A673 (cell line): ENCODE measurements at regions of chr14 and their contacts with region 1.

Region 1: DNA sequence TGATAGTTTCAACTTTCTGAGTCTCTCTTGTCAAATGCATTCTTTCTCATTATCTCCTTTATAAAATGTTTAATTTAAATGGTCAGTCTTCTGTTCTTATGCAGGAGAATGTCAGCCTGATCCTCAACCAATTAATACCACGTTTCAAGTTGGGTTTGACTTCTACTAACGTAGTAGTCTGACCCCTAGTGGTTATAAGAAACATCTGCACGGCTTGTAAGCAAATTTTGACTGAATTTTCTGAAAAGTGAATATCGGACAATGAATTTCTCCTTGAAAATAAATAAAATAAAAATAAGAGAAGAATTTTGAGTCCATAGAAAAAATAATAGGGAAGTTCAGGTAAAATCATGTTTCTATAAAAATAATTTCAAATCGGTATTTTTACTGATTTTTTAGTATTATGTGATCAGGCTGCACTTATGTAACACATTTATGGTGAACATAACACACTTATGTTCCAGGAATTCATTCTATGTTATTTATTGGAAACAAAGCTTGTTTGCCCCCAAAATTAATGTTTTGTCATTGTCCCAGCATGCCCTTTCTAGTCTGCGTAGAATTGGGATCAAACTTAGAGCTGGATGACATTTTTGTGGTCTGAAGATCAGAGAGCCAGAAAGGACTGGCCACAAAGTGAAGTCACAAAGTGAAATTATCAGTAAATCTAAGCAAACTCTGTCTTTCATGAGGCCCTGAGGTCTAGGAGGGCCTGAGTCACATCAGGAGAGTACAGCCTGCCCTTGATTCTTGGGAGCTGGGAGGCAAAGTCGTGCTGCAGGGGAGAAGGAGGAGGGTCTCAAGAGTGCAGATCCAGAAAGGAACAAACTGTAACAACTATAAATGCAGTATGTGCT is 101.2 kb upstream of the STXBP6 start:
- DNase-seq: peak; percentile 68
- H3K4me3 ChIP-seq: no peak overlapping the region
- H3K27ac ChIP-seq: no peak overlapping the region
- H3K4me1 ChIP-seq: no peaks in the 10 kb centered on the region
- H3K27me3 ChIP-seq: no peaks in the 10 kb centered on the region
- CTCF ChIP-seq: peak; percentile 82

Region 2: GRCh38 chr14:24710403-24711112 is 440.6 kb before region 1 on chr14:
- CTCF ChIA-PET with region 1: interaction called, 3 read pairs
- POLR2A ChIA-PET with region 1: no interaction called
- intact Hi-C with region 1: loop called (anchors 1 kb)
- DNase-seq: peak; percentile 79
- H3K4me3 ChIP-seq: no peak overlapping the region
- H3K27ac ChIP-seq: no peak overlapping the region
- H3K4me1 ChIP-seq: no peaks in the 10 kb centered on the region
- H3K27me3 ChIP-seq: no peaks in the 10 kb centered on the region
- CTCF ChIP-seq: peak; percentile 87

Region 3: DNA sequence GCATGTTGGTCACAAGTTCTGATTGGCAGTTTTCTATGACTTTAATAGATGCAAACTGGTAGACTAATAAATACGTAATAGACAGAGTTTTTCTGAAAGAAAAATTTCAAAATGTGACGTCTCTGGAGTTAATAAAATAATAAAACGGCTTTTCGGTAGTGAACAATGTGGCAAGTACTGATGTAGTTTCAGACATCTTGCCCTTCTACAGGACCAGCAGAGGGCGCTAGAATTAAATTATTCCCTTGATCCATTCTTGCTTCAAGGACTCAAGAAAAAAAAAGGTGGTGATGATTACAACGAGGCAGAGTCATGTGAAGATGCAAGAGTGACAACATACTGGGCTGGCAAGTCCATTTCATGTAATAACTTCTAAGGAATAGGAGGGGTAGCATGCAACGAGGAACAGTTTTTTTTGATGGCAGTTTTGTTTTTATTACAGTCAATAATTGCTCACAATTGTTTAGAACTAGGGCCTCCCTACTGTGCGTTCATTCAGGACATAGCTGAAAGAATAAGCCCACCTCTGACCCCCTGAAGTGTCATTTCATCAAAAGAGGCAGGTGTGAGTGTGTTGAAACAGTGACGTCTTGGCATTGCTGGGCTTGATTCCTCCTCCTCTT is 416.2 kb before region 1 on chr14:
- CTCF ChIA-PET with region 1: no interaction called
- POLR2A ChIA-PET with region 1: no interaction called
- intact Hi-C with region 1: loop called (anchors 5 kb)
- DNase-seq: peak; percentile 83
- H3K4me3 ChIP-seq: no peak overlapping the region
- H3K27ac ChIP-seq: no peak overlapping the region
- H3K4me1 ChIP-seq: no peaks in the 10 kb centered on the region
- H3K27me3 ChIP-seq: no peaks in the 10 kb centered on the region
- CTCF ChIP-seq: peak; percentile 87

Region 4: GRCh38 chr14:24806061-24806678 is 345.0 kb before region 1 on chr14:
- CTCF ChIA-PET with region 1: interaction called, 4 read pairs
- POLR2A ChIA-PET with region 1: no interaction called
- intact Hi-C with region 1: loop called (anchors 2 kb)
- DNase-seq: peak; percentile 66
- H3K4me3 ChIP-seq: no peak overlapping the region
- H3K27ac ChIP-seq: no peak overlapping the region
- H3K4me1 ChIP-seq: no peaks in the 10 kb centered on the region
- H3K27me3 ChIP-seq: peaks cover 5% of the 10 kb centered on the region
- CTCF ChIP-seq: peak; percentile 88

Region 5: DNA sequence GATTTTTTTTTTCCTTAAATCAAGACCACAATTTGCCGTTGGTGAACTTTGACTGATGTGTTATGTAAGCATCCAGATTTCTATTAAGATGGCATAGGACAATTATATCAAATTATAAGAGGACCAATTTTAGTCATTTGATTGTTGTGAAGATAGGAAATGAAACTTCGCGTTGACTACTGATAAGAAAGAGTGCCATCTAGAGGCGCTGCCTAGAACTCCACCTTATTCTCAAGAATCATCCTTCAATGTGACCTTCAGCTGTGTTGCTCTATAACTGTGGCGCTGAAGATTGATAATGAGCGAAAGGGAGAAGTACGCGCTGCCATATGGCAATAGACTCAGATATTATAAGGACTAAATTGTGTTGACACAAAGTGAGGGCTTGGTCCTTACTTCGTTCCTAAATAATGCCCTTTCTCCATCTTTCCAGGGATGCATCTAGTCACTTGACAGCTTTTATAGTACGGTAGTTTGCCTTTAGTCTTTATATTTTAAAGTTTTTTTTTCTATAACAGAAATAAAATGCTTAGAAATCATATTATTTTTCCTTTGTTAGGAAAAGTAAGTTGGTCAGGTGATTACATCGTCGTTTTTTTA is 249.5 kb after region 1 on chr14:
- CTCF ChIA-PET with region 1: no interaction called
- POLR2A ChIA-PET with region 1: no interaction called
- intact Hi-C with region 1: loop called (anchors 1 kb)
- DNase-seq: peak; percentile 79
- H3K4me3 ChIP-seq: no peak overlapping the region
- H3K27ac ChIP-seq: no peak overlapping the region
- H3K4me1 ChIP-seq: peaks cover 31% of the 10 kb centered on the region
- H3K27me3 ChIP-seq: peaks cover 8% of the 10 kb centered on the region
- CTCF ChIP-seq: peak; percentile 87